Pancreas (tissue), 10 donors: ENCODE measurements at regions of chr3 and their contacts with region 1.

Region 1: GRCh38 chr3:172616031-172616461 is 92.8 kb upstream of the TNFSF10 start:
- DNase-seq: no peak
- ATAC-seq: peak in 2 of 4 donors; percentile 66 to 78
- H3K4me3 ChIP-seq: no peak overlapping the region
- H3K27ac ChIP-seq: no peak overlapping the region
- H3K4me1 ChIP-seq: peaks cover 0 to 5% (median 0%) of the 10 kb centered on the region in 3 donors
- H3K27me3 ChIP-seq: no peaks in the 10 kb centered on the region
- CTCF ChIP-seq: no peak

Region 2: DNA sequence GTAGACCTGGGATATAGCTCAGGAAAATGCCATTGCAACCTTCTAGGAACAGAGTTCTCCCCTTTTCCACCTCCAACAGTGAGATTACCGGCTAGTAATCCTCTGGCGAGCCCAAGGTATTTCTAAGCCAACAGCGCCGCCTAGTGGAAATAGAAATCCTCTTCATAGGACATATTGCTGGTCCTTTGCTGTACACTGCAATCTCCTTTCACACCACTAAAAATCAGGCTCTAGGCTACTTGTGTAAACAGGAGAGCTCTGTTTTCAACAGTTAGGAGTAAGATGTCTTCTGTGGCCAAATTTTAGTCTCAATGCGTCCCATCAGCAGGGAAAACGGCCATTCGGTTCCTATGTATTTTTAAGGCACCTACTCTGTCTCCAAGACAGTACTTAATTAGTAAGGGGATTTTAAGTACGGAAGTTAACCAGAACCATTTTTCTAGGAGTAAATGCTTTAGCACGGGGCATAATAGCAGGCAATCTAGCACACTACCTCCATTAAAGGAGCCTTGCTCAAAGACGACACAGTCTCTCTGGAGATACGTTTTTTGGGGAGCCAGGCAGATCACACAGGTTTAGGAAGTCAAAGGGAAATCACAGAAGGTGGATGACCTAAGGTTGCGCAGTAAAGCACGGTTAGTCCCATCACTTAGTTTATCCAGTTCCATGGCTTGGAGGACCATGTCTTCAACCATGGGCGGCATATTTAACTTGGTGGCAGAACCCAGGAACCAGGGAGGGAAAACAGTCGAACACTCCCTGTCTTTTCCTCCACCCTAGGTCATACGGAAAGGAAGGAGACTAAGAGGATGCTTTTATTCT is 51.0 kb after region 1 on chr3:
- intact Hi-C with region 1: loop called in 1 of 3 experiments (anchors 10 kb)
- DNase-seq: peak in 4 of 6 donors; percentile 49 to 80 (median 62)
- ATAC-seq: peak; percentile 98 to 100 (median 99)
- H3K4me3 ChIP-seq: no peak overlapping the region
- H3K27ac ChIP-seq: peak overlapping the region in 1 of 4 donors; percentile 0
- H3K4me1 ChIP-seq: no peaks in the 10 kb centered on the region
- H3K27me3 ChIP-seq: no peaks in the 10 kb centered on the region
- CTCF ChIP-seq: peak; percentile 75 to 88 (median 81)